ENCODE measurements at regions of chr3 and their contacts with region 1.

Region 1: GRCh38 chr3:24237971-24238767 is 256.5 kb downstream of the THRB start:
- DNase-seq: peak; percentile 89
- ATAC-seq: peak; percentile 87
- H3K4me3 ChIP-seq: no peak overlapping the region
- H3K27ac ChIP-seq: no peak overlapping the region
- H3K4me1 ChIP-seq: peaks cover 7% of the 10 kb centered on the region
- H3K27me3 ChIP-seq: peaks cover 18% of the 10 kb centered on the region
- CTCF ChIP-seq: peak; percentile 81
- POLR2A ChIP-seq: no peak
- RAD21 ChIP-seq: peak; percentile 80

Region 2: DNA sequence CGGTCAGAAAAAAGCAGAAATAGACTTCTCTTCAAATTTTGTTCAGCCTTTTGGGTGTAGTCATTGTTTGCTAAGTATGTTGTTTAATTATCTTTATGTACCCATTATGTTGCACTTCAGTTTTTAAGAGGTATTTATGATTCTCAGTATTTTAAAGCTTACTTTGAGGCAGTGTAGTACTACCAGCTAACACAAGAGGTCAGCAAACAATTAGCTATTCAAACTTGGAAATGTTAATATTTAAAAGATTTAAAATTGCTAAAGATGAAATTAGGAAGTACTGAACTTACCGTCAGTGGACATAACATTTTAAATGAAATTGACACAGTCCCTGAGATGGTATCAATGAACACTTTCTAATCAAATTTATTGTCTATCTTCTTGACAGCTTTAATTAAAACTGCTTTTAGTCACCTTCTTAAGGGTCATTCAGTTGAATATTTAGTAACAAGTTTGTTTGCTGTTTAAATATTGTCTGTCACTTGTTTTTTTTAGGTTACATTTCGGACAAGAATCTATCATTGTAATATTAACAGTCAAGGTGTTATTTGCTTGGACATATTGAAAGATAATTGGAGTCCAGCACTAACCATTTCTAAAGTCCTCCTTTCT is 349.4 kb before region 1 on chr3:
- CTCF ChIA-PET with region 1: no interaction called
- POLR2A ChIA-PET with region 1: no interaction called
- dilution Hi-C with region 1: no loop called
- in situ Hi-C with region 1: loop called (anchors 25 kb)
- intact Hi-C with region 1: loop called (anchors 2 kb)
- DNase-seq: peak; percentile 64
- ATAC-seq: peak; percentile 74
- H3K4me3 ChIP-seq: no peak overlapping the region
- H3K27ac ChIP-seq: no peak overlapping the region
- H3K4me1 ChIP-seq: no peaks in the 10 kb centered on the region
- H3K27me3 ChIP-seq: no peaks in the 10 kb centered on the region
- CTCF ChIP-seq: peak; percentile 77
- POLR2A ChIP-seq: no peak
- RAD21 ChIP-seq: peak; percentile 83

Region 3: GRCh38 chr3:23999012-23999641 is 239.0 kb before region 1 on chr3:
- CTCF ChIA-PET with region 1: interaction called, 3 read pairs
- POLR2A ChIA-PET with region 1: no interaction called
- dilution Hi-C with region 1: no loop called
- in situ Hi-C with region 1: loop called (anchors 10 kb)
- intact Hi-C with region 1: loop called (anchors 1 kb)
- DNase-seq: peak; percentile 42
- ATAC-seq: peak; percentile 57; the same call in 1 of the 2 replicates
- H3K4me3 ChIP-seq: no peak overlapping the region
- H3K27ac ChIP-seq: no peak overlapping the region
- H3K4me1 ChIP-seq: peaks cover 7% of the 10 kb centered on the region; the same call in 1 of the 2 replicates
- H3K27me3 ChIP-seq: no peaks in the 10 kb centered on the region; the same call in none of the 2 replicates
- CTCF ChIP-seq: peak; percentile 98
- POLR2A ChIP-seq: peak; percentile 50
- RAD21 ChIP-seq: peak; percentile 100

Region 4: DNA sequence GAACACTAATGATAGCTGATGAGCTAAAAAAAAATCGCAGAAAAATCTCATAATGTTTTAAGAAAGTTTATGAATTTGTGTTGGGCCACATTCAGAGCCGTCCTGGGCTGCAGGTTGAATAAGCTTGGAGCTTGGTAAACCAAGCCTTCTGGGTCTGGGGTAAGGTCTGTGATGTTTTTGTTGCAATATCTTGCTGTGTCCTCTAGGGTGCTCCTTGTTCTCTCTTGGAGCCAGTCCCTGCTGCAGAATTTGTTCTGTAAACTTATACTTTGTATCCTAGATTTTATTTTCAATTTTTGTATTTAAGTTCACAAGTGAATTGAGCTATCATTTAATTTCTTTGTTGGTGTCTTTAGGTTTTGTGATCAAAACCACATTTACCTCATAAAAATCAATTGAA is 149.4 kb before region 1 on chr3:
- CTCF ChIA-PET with region 1: no interaction called
- POLR2A ChIA-PET with region 1: no interaction called
- dilution Hi-C with region 1: no loop called
- in situ Hi-C with region 1: no loop called
- intact Hi-C with region 1: loop called (anchors 5 kb)
- DNase-seq: peak; percentile 41
- ATAC-seq: peak; percentile 92
- H3K4me3 ChIP-seq: no peak overlapping the region
- H3K27ac ChIP-seq: no peak overlapping the region
- H3K4me1 ChIP-seq: no peaks in the 10 kb centered on the region
- H3K27me3 ChIP-seq: peaks cover 1% of the 10 kb centered on the region; the same call in 1 of the 2 replicates
- CTCF ChIP-seq: peak; percentile 58
- POLR2A ChIP-seq: no peak
- RAD21 ChIP-seq: peak; percentile 66

Region 5: GRCh38 chr3:24160424-24161095 is 77.6 kb before region 1 on chr3:
- CTCF ChIA-PET with region 1: no interaction called
- POLR2A ChIA-PET with region 1: no interaction called
- dilution Hi-C with region 1: no loop called
- in situ Hi-C with region 1: no loop called
- intact Hi-C with region 1: no loop called
- DNase-seq: peak; percentile 29
- ATAC-seq: peak; percentile 69; the same call in 1 of the 2 replicates
- H3K4me3 ChIP-seq: no peak overlapping the region
- H3K27ac ChIP-seq: no peak overlapping the region
- H3K4me1 ChIP-seq: peaks cover 3% of the 10 kb centered on the region
- H3K27me3 ChIP-seq: peaks cover 3% of the 10 kb centered on the region
- CTCF ChIP-seq: no peak
- POLR2A ChIP-seq: no peak
- RAD21 ChIP-seq: no peak

Region 6: GRCh38 chr3:24185738-24186384 is 52.3 kb before region 1 on chr3:
- CTCF ChIA-PET with region 1: interaction called, 5 read pairs
- POLR2A ChIA-PET with region 1: no interaction called
- dilution Hi-C with region 1: no loop called
- in situ Hi-C with region 1: no loop called
- intact Hi-C with region 1: loop called (anchors 2 kb)
- DNase-seq: peak; percentile 57
- ATAC-seq: peak; percentile 81
- H3K4me3 ChIP-seq: no peak overlapping the region
- H3K27ac ChIP-seq: no peak overlapping the region
- H3K4me1 ChIP-seq: no peaks in the 10 kb centered on the region
- H3K27me3 ChIP-seq: peaks cover 5% of the 10 kb centered on the region
- CTCF ChIP-seq: peak; percentile 53
- POLR2A ChIP-seq: no peak
- RAD21 ChIP-seq: peak; percentile 51

Region 7: GRCh38 chr3:24199775-24200247 is 38.4 kb before region 1 on chr3:
- CTCF ChIA-PET with region 1: no interaction called
- POLR2A ChIA-PET with region 1: no interaction called
- dilution Hi-C with region 1: no loop called
- in situ Hi-C with region 1: no loop called
- intact Hi-C with region 1: no loop called
- DNase-seq: no peak
- ATAC-seq: no peak
- H3K4me3 ChIP-seq: no peak overlapping the region
- H3K27ac ChIP-seq: no peak overlapping the region
- H3K4me1 ChIP-seq: no peaks in the 10 kb centered on the region
- H3K27me3 ChIP-seq: peaks cover 2% of the 10 kb centered on the region; the same call in 1 of the 2 replicates
- CTCF ChIP-seq: no peak
- POLR2A ChIP-seq: no peak
- RAD21 ChIP-seq: no peak

Region 8: DNA sequence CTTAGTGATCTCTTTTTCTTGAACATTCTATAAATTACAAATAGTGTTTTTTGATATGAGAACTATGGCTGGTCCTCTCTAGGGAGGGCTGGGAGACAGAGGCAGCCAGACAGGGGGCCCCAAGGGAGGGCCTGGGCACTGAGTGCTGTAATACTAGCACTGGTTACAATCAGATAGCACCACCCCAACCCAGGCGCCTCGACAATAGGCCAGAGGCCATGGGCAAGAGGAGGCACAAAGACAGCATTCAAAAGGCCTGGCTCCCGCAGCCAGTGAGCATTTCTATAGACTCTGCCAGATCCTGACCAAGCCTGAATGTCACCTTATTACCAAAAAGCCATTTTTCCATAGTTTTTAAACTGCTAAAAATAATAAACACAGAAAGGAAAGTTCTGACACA is 97.9 kb after region 1 on chr3:
- CTCF ChIA-PET with region 1: no interaction called
- POLR2A ChIA-PET with region 1: interaction called, 11 read pairs
- dilution Hi-C with region 1: no loop called
- in situ Hi-C with region 1: no loop called
- intact Hi-C with region 1: no loop called
- DNase-seq: no peak
- ATAC-seq: no peak
- H3K4me3 ChIP-seq: no peak overlapping the region
- H3K27ac ChIP-seq: no peak overlapping the region
- H3K4me1 ChIP-seq: no peaks in the 10 kb centered on the region
- H3K27me3 ChIP-seq: no peaks in the 10 kb centered on the region; the same call in 1 of the 2 replicates
- CTCF ChIP-seq: no peak
- POLR2A ChIP-seq: no peak
- RAD21 ChIP-seq: no peak

Measured in IMR-90 (cell line).